Posterior cingulate gyrus (tissue), 11 donors: ENCODE measurements at regions of chr15 and their contacts with region 1.

Region 1: DNA sequence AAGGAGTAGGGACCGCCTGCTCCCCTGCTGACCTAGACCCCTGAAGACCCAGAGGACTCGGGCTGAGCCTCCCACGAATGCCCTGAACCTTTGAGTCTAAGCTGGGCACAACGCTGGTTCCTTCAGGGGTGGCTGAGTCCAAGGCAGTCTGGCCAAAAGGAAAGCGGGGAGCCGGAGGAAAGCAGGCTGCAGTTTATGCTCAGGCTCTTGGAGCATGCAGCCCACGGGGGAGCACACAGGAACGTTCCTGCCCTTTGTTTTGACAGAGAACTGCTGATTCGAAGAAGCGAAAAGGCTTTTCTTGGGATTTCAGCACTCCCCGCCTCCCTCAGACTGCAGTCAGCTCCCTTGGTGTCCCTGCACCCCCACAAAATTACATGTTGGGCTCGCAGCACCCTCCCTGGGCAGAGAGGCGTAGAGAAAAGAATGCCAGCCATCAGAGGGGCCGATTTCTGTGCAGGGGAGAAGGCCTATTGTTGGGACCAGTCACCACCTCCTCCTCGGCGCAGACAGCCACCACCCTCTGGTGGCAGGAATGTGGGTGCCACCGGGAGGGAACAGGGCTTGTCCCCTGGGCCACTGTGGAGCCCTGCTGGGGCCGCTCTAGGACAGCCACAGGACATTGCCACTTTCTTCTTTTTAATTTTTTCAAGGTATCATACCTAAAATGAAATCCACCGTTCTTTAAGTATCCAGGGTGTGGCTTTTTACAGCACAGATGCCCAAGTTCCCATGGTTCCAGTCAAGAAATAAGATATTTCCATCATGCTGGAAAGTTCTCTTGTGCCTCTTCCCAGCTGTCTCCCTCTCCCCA is 72.2 kb downstream of the SMAD6 start:
- DNase-seq: peak; percentile 46 to 94 (median 70)

Region 2: GRCh38 chr15:66603301-66604179 is 170.7 kb before region 1 on chr15:
- intact Hi-C with region 1: loop called (anchors 5 kb)
- DNase-seq: peak in 6 of 10 donors; percentile 25 to 86 (median 41)

Region 3: DNA sequence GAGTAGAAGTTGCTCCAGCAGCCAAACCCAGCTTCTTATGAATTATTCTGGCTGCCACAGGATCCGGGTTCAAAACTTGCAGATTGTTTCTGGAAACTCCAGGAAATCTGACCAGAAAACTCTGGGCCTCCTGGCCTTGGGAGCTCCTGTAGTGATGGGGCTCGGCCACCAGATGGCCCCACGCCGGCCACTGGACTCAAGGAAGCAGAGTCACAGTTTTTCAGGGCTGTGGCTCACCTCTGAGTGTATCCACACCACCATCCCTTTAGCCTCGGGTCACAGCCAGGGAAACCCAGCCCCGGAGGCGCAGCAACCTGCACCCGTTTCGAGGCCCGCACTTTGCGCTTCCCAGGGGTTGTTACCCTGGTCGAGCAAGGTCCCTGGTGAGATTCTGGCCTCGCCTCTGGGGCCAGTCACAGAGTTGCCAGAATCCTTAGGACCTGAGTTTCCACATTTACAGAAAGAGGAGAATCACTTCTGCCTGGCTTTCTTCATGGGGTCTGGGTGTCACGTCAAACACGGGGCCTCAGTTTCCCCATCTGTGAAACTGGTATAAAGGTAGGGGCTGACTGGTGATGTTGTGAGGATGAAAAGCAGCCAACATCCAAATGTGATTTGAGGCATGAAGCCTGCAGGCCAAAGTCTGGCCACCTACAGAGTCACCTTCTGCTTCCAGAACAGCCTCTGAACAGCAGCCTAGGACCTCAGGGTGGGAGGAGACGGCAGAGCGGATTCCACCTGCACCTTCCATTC is 154.9 kb before region 1 on chr15:
- intact Hi-C with region 1: loop called (anchors 5 kb)
- DNase-seq: peak; percentile 26 to 94 (median 66)

Region 4: GRCh38 chr15:66700802-66701421 is 73.3 kb before region 1 on chr15:
- intact Hi-C with region 1: loop called (anchors 2 kb)
- DNase-seq: peak; percentile 58 to 95 (median 74)